ENCODE measurements at regions of chr20 and their contacts with region 1.

Region 1: DNA sequence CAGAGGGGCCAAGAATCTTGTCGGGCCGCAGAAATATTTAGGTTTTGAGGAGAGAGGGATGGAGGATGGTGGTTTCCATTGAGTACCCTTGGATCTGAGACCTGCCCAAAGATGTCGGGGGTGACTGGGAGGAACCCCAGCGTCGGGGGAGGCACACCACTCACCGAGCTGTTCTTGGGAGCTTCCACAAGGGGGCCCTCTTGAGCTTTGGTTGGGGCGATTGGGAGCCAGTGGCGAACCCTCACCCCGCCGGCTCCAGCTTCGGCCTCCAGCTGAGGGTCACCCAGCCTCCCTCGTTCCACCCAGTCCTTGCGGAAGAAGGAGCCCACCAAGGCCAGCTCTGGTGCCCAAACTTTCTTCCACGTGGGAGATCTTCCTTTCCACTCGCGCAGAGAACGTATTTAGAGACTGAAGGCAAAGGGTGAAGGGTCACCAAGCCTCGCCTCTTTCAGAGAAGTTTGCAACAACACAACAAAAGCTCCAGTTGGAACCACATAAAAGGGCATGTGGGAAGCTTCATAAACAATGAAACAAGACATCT is 33.6 kb downstream of the APCDD1L start:
- ATAC-seq: peak in 3 of 8 experiments; percentile 47 to 67 (median 59)
- H3K4me3 ChIP-seq: no peak overlapping the region
- H3K27ac ChIP-seq: no peak overlapping the region
- H3K4me1 ChIP-seq: no peaks in the 10 kb centered on the region

Region 2: DNA sequence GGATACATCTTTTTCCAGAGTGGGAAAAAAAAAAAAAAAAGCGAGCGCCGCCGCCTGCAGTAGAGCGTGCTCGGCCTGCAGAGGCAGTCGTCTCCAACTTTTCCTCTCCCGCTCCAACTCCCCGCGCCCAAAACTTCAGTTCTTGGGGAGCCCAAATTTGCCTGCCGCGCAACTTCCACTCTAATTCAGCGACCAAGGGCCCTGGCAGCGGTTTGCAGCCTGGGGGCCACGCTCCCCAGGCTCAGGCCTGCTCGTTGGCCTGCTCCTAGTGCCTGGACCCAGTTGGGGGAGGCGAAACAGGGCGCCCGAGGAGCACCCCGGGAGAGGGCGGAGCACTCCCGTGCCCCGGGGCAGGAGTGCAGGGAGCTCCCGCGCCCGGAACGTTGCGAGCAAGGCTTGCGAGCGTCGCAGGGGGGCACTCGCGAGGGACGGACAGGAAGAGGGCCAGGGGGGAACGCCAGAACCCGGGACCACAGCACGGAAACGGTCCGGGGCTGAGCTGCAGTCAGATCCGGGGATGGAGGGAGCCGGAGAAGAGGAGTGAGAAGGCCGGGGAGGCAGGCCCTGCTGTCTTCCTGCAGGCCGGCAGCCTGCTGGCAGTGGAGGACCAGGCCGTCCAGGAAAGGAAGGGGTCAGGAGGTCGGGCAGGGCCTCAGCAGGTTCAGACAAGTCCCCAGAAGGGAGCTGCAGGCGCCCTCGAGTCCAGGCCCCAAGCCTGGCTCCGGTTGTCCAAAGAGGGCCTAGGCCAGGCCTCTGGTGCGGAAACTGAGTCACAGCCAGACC is 169.4 kb after region 1 on chr20 and contains the start of gene STX16:
- in situ Hi-C with region 1: loop called in 1 of 9 experiments (anchors 10 kb)
- ATAC-seq: peak; percentile 79 to 85 (median 82)
- H3K4me3 ChIP-seq: peak within 1 kb of the TSS; percentile 57 to 95 (median 84)
- H3K27ac ChIP-seq: peak within 1 kb of the TSS; percentile 69 to 90
- H3K4me1 ChIP-seq: peaks cover 27 to 45% of the 10 kb centered on the region in 2 donors
- total RNA-seq, gene STX16: 17.5 to 86.6 (median 30.4) TPM

Region 3: GRCh38 chr20:58740054-58740936 is 258.7 kb after region 1 on chr20:
- in situ Hi-C with region 1: no loop called
- ATAC-seq: no peak
- H3K4me3 ChIP-seq: no peak overlapping the region
- H3K27ac ChIP-seq: no peak overlapping the region
- H3K4me1 ChIP-seq: peaks cover 16 to 26% of the 10 kb centered on the region in 2 donors

Region 4: GRCh38 chr20:58839474-58839874 is 357.9 kb after region 1 on chr20:
- in situ Hi-C with region 1: loop called in 3 of 9 experiments (anchors 25 kb)
- ATAC-seq: peak in 7 of 8 experiments; percentile 65 to 88 (median 78)
- H3K4me3 ChIP-seq: peak overlapping the region in 4 of 5 donors; percentile 6 to 24 (median 20)
- H3K27ac ChIP-seq: no peak overlapping the region
- H3K4me1 ChIP-seq: peaks cover 0 to 10% of the 10 kb centered on the region in 2 donors

Measured in motor neuron (in vitro differentiated cells).